ENCODE measurements at regions of chr5 and their contacts with region 1.

Region 1: DNA sequence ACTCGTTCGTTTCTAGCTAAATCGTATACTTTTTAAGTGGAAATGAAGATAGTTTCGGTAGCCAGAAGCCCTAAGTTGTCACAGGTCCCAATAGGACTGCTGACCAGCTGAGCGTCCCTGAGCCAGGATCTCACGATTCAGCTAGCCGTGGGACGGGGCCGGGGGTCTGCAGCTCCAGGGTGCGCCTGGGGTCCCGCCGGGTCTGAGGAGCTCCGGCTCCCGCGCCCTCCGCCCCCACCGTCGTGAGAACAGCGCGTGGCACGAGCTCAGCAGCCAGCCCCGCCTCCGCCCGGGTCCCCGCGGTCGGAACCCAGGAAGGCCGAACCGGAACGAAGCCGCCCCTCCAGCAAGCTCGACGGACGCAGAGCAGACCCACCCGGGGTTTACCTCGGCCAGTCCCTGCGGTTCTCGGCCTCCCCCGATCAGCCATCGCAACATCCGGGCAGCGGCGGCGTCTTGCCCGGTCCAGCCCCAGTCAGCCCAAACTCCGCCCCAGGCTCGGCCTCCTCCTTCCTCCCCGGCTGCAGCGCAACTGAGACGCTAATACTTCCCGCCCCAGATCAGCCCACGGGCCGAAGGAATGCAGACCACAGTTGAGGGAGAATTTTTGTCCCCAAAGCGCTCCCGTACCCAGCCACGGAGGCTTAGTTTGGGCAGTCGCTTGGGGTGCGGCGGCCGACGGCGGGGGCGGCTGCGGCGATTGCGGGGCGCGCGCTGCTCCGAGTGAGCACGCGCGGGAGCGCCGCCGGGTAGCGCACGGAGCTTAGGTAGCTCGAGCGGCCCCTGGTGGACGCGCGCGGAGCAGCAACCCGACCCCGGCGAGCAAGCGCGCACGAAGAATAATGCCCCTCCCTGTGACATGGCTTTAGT is at the start of gene WDR41:
- DNase-seq: peak; percentile 86
- H3K4me3 Mint-ChIP-seq: peak within 1 kb of the TSS; percentile 87
- H3K27ac Mint-ChIP-seq: peak within 1 kb of the TSS; percentile 85
- H3K4me1 Mint-ChIP-seq: peaks cover 36% of the 10 kb centered on the region
- H3K27me3 Mint-ChIP-seq: peaks cover 12% of the 10 kb centered on the region
- total RNA-seq, gene WDR41: 25.4 TPM

Region 2: DNA sequence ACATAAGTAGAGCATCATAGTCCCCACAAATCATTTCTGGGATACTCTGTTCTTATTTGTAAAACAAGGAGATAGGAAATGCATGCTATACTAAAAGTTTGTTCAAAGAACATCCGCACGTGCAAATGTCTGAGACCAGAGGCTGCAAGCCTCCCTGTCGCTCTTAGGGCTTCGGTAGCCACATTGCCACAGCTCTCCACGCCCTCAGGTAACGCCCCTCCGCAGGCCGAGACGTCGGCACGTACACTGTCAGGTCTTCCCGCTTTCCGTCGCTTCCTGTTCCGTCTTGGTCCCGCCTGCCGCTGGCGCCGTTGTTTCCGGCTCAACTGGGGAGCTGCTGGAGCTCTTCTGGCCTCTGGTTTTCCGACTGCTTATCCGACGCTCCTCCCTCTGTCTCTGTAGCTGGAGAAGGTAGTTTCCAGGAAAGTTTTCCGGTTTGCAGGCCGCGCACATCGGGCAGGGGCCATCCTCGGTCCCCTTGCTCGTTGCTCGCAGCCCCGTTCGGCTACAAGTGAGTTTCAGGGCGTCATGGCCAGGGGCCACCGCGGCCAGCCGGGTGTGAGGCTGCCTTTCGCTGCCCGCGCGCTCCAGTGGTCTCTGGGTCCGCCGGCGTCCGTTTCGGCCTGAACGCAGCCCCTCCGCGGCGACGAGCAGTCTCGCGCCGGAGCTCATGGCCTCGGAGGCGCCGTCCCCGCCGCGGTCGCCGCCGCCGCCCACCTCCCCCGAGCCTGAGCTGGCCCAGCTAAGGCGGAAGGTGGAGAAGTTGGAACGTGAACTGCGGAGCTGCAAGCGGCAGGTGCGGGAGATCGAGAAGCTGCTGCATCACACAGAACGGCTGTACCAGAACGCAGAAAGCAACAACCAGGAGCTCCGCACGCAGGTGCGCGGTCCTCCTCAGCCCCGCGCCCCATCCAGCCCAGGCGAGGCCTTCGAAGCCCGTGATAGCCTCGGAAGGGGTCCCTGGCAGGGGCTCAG is 461.6 kb before region 1 on chr5 and contains the start of gene AGGF1:
- CTCF ChIA-PET with region 1: interaction called, 15 read pairs
- POLR2A ChIA-PET with region 1: interaction called, 14 read pairs
- DNase-seq: peak; percentile 94
- H3K4me3 Mint-ChIP-seq: peak within 1 kb of the TSS; percentile 89
- H3K27ac Mint-ChIP-seq: peak within 1 kb of the TSS; percentile 89
- H3K4me1 Mint-ChIP-seq: peaks cover 39% of the 10 kb centered on the region
- H3K27me3 Mint-ChIP-seq: peaks cover 3% of the 10 kb centered on the region
- total RNA-seq, gene AGGF1: 26.4 to 28.6 TPM

Region 3: GRCh38 chr5:77143998-77144836 is 347.8 kb before region 1 on chr5:
- CTCF ChIA-PET with region 1: interaction called, 56 read pairs
- POLR2A ChIA-PET with region 1: interaction called, 5 read pairs
- DNase-seq: peak; percentile 60
- H3K4me3 Mint-ChIP-seq: no peak overlapping the region
- H3K27ac Mint-ChIP-seq: no peak overlapping the region
- H3K4me1 Mint-ChIP-seq: peaks cover 38% of the 10 kb centered on the region
- H3K27me3 Mint-ChIP-seq: peaks cover 6% of the 10 kb centered on the region

Region 4: GRCh38 chr5:77379558-77380061 is 112.4 kb before region 1 on chr5:
- CTCF ChIA-PET with region 1: interaction called, 11 read pairs
- POLR2A ChIA-PET with region 1: interaction called, 9 read pairs
- DNase-seq: peak; percentile 26
- H3K4me3 Mint-ChIP-seq: no peak overlapping the region
- H3K27ac Mint-ChIP-seq: peak overlapping the region; percentile 75
- H3K4me1 Mint-ChIP-seq: peaks cover 27% of the 10 kb centered on the region
- H3K27me3 Mint-ChIP-seq: no peaks in the 10 kb centered on the region

Region 5: GRCh38 chr5:77463905-77464304 is 28.1 kb before region 1 on chr5:
- CTCF ChIA-PET with region 1: interaction called, 14 read pairs
- POLR2A ChIA-PET with region 1: no interaction called
- DNase-seq: no peak
- H3K4me3 Mint-ChIP-seq: no peak overlapping the region
- H3K27ac Mint-ChIP-seq: no peak overlapping the region
- H3K4me1 Mint-ChIP-seq: peaks cover 3% of the 10 kb centered on the region
- H3K27me3 Mint-ChIP-seq: no peaks in the 10 kb centered on the region